ENCODE measurements at regions of chr12 and their contacts with region 1.

Region 1: GRCh38 chr12:104662203-104662602 is 205.5 kb downstream of the CHST11 start:
- DNase-seq: no peak
- H3K4me3 ChIP-seq: no peak overlapping the region
- H3K27ac ChIP-seq: no peak overlapping the region
- H3K4me1 ChIP-seq: no peaks in the 10 kb centered on the region
- H3K27me3 ChIP-seq: no peaks in the 10 kb centered on the region
- CTCF ChIP-seq: no peak
- POLR2A ChIP-seq: no peak

Region 2: DNA sequence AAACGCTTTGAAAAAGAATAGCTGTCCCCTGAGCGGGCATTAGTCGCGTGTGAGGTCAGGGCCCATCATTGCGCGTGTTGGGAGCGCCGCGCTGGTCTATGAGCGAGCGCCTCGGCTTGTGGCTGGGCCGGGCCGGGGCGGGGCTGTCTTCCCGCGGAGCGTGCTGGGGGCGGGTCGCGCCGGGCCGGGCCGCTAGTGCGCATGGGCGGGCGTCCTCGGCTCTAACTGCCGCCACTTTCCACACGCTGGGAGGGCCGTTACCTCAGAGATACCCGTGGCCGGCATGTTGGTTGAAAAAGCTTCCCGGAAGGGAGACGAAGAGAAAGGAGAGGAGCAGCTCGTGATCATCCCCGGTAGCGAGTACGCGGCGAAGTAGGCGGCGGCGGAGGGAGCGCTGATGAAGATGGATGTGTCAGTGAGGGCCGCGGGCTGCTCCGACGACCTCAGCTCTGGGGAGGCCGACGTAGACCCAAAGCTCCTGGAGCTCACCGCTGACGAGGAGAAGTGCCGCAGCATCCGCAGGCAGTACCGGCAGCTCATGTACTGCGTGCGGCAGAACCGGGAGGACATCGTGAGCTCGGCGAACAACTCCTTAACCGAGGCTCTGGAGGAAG is 358.6 kb before region 1 on chr12 and contains the start of gene EID3:
- intact Hi-C with region 1: no loop called
- DNase-seq: peak; percentile 80
- H3K4me3 ChIP-seq: peak within 1 kb of the TSS; percentile 27 to 38
- H3K27ac ChIP-seq: peak within 1 kb of the TSS; percentile 43 to 54
- H3K4me1 ChIP-seq: no peaks in the 10 kb centered on the region
- H3K27me3 ChIP-seq: no peaks in the 10 kb centered on the region
- CTCF ChIP-seq: no peak
- POLR2A ChIP-seq: peak; percentile 20
- total RNA-seq, gene EID3: 8.6 to 18.1 TPM

Region 3: GRCh38 chr12:104626069-104626837 is 36.0 kb before region 1 on chr12:
- intact Hi-C with region 1: loop called (anchors 5 kb)
- DNase-seq: no peak
- H3K4me3 ChIP-seq: no peak overlapping the region
- H3K27ac ChIP-seq: no peak overlapping the region
- H3K4me1 ChIP-seq: no peaks in the 10 kb centered on the region
- H3K27me3 ChIP-seq: no peaks in the 10 kb centered on the region
- CTCF ChIP-seq: no peak
- POLR2A ChIP-seq: no peak

Region 4: DNA sequence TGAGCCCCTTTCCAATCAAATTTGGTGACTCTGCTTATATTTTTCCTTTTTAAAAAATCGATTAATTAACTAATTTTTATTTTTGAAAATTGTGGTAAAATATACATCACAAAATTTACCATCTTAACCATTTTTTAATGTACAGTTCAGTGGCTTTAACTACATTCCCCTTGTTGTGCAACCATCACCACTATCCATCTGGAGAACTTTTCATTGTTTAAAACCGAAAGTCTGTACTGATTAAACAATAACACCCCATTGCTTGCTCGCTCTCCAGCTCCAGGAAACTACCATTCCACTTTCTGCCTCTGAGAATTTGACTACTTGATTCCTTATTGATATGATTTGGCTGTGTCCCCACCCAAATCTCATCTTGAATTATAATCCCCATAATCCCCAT is 951.7 kb after region 1 on chr12:
- intact Hi-C with region 1: no loop called
- DNase-seq: no peak
- H3K4me3 ChIP-seq: no peak overlapping the region
- H3K27ac ChIP-seq: no peak overlapping the region
- H3K4me1 ChIP-seq: no peaks in the 10 kb centered on the region
- H3K27me3 ChIP-seq: no peaks in the 10 kb centered on the region
- CTCF ChIP-seq: no peak
- POLR2A ChIP-seq: no peak

Measured in prostate gland (tissue), 2 donors.